Activated T-helper 2 cell treated with anti-CD3 and anti-CD28 coated beads, Interferon-gamma antibody, Interleukin-2, Interleukin-4, amounts not matched to agents 10 μg/mL and 5 μg/mL and 100 μg/mL, durations not matched to agents 14 hours and 24 hours and 36 hours (primary cell): ENCODE measurements at regions of chr4 and their contacts with region 1.

Region 1: DNA sequence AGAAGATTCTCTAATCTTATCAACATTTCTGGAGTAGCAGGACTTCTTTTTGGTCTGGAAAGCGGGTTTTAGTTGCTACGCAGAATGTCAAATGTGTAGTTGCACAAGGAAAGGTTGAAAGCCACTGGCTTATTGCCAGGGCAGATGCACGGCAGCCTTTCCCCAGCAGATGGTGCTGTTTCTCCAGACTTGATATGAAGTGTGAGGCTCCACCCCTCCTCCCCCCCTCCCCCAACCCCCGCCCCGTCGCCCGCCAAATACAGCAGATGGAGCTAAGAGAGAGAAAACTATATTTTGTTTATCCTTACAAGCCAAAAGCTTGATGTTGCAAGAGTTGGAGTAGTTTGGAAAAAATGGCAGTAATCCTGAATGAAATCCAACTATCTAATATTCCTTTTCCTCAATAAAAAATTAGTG is 32.0 kb downstream of the ENOPH1 start:
- DNase-seq: peak; percentile 72
- H3K4me3 Mint-ChIP-seq: no peak overlapping the region
- H3K27ac Mint-ChIP-seq: no peak overlapping the region
- H3K4me1 Mint-ChIP-seq: peaks cover 3% of the 10 kb centered on the region
- H3K27me3 Mint-ChIP-seq: no peaks in the 10 kb centered on the region

Region 2: GRCh38 chr4:82739316-82740179 is 277.1 kb after region 1 on chr4:
- intact Hi-C with region 1: loop called (anchors 1 kb)
- DNase-seq: peak; percentile 67
- H3K4me3 Mint-ChIP-seq: no peak overlapping the region
- H3K27ac Mint-ChIP-seq: no peak overlapping the region
- H3K4me1 Mint-ChIP-seq: no peaks in the 10 kb centered on the region
- H3K27me3 Mint-ChIP-seq: no peaks in the 10 kb centered on the region

Region 3: DNA sequence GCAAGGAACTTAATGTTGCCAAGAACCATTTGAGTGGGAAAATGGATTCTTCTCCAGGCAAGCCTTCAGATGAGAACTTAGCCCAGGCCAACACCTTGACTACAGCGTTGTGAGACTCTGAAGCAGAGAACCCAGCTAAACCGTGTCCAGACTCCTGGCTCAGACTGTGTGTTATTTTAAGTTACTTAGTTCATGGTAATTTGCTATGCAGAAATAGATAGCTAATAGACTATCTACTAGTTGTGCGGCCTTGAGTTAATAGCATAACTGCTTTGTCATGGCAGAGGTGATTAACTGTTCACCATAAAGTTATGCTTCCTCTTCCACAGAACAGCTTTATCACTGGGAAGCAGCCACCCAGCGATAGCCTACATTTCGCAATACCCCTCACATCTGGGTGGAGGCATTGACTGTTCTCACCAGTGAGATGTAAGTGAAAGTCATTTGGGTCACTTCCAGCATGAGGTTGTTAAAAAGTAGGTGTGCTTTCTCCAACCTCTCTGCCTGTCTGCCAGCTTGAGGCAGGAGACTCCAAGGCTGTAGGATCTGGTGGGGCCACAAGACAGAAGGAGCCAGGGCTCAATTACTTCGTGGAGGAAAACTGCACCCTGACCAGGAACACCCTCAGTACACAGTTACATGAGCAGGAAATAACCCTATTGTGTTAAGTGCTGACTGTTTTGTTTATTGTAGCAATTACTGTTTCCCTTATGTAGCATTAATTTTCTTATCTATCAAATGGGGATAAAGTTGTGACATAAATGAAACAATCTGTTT is 1167.7 kb after region 1 on chr4:
- intact Hi-C with region 1: no loop called
- DNase-seq: no peak
- H3K4me3 Mint-ChIP-seq: no peak overlapping the region
- H3K27ac Mint-ChIP-seq: no peak overlapping the region
- H3K4me1 Mint-ChIP-seq: no peaks in the 10 kb centered on the region
- H3K27me3 Mint-ChIP-seq: peaks cover 15% of the 10 kb centered on the region